ENCODE measurements at regions of chr10 and their contacts with region 1.

Region 1: DNA sequence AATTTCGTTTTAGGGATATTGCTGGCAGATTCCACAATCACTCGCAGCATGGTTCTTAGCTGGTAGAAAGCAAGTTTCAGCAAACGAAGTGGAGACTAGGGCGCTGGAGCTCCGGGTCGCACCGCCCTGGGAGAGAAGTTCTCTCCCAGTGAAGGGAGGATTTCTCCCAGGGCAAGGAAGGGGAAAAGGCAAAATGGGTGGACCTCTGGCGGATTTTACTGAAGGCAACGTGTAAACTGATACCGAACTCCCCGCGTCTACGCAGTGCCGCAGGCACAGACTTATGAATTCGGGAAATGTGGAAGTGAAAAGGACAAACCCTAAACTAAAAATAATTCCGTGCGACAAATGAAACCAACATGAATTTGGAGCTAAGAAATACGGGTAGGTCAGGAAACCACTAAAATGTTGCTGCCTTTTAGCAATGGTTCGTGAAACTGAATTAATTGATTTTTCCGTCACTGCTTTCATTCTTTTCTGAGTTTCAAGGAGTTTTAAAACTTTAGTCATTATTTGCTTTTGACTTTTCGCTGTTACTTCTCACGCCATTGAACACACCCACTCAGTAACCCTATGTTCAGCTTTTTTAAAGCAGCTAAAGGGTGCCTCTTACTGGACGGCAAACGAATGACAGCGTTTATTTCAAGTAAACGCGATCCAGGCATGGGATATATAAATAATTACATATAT is at the start of gene MYOF:
- DNase-seq: peak; percentile 68
- ATAC-seq: peak; percentile 79
- H3K4me3 Mint-ChIP-seq: peak within 1 kb of the TSS; percentile 97
- H3K27ac Mint-ChIP-seq: peak within 1 kb of the TSS; percentile 99
- H3K4me1 Mint-ChIP-seq: peaks cover 24% of the 10 kb centered on the region
- H3K27me3 Mint-ChIP-seq: peaks cover 9% of the 10 kb centered on the region
- total RNA-seq, gene MYOF: 37.8 to 40.0 TPM

Region 2: GRCh38 chr10:93080350-93081046 is 401.8 kb before region 1 on chr10:
- CTCF ChIA-PET with region 1: interaction called, 3 read pairs
- POLR2A ChIA-PET with region 1: no interaction called
- intact Hi-C with region 1: loop called in 1 of 2 experiments (anchors 2 kb)
- DNase-seq: peak; percentile 72
- ATAC-seq: peak; percentile 70
- H3K4me3 Mint-ChIP-seq: no peak overlapping the region
- H3K27ac Mint-ChIP-seq: no peak overlapping the region
- H3K4me1 Mint-ChIP-seq: peaks cover 7% of the 10 kb centered on the region
- H3K27me3 Mint-ChIP-seq: peaks cover 45% of the 10 kb centered on the region

Region 3: GRCh38 chr10:93363891-93364648 is 118.2 kb before region 1 on chr10:
- CTCF ChIA-PET with region 1: interaction called, 35 read pairs
- POLR2A ChIA-PET with region 1: no interaction called
- intact Hi-C with region 1: no loop called
- DNase-seq: no peak
- ATAC-seq: no peak
- H3K4me3 Mint-ChIP-seq: no peak overlapping the region
- H3K27ac Mint-ChIP-seq: no peak overlapping the region
- H3K4me1 Mint-ChIP-seq: no peaks in the 10 kb centered on the region
- H3K27me3 Mint-ChIP-seq: no peaks in the 10 kb centered on the region

Region 4: GRCh38 chr10:93413252-93413689 is 69.0 kb before region 1 on chr10:
- CTCF ChIA-PET with region 1: interaction called, 33 read pairs
- POLR2A ChIA-PET with region 1: no interaction called
- intact Hi-C with region 1: no loop called
- DNase-seq: peak; percentile 35
- ATAC-seq: peak; percentile 62
- H3K4me3 Mint-ChIP-seq: no peak overlapping the region
- H3K27ac Mint-ChIP-seq: peak overlapping the region; percentile 73
- H3K4me1 Mint-ChIP-seq: peaks cover 69% of the 10 kb centered on the region
- H3K27me3 Mint-ChIP-seq: no peaks in the 10 kb centered on the region

Region 5: DNA sequence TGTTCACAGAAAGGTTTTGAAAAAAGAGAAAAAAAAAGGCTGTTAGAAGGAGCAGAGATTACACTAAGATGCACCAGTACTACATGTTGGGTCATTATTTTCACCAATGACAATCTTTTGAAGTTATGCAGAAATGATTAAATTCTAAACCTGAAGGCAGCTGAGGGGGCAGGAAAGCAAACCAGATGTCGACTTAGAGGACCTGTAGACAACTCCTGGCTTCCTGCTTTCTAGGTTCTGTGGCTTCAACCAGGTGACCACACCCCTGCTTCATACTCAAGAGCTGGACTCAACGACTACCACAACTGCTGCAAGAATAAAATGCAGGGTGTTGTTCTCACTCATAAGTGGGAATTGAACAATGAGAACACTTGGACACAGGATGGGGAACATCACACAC is 30.1 kb before region 1 on chr10:
- CTCF ChIA-PET with region 1: no interaction called
- POLR2A ChIA-PET with region 1: no interaction called
- intact Hi-C with region 1: no loop called
- DNase-seq: peak; percentile 50
- ATAC-seq: peak; percentile 71
- H3K4me3 Mint-ChIP-seq: no peak overlapping the region
- H3K27ac Mint-ChIP-seq: no peak overlapping the region
- H3K4me1 Mint-ChIP-seq: peaks cover 10% of the 10 kb centered on the region
- H3K27me3 Mint-ChIP-seq: no peaks in the 10 kb centered on the region

Region 6: GRCh38 chr10:93496322-93497041 is 14.2 kb after region 1 on chr10 and contains the start of gene CEP55:
- CTCF ChIA-PET with region 1: interaction called, 20 read pairs
- POLR2A ChIA-PET with region 1: interaction called, 9 read pairs
- intact Hi-C with region 1: loop called (anchors 1 to 2 kb)
- DNase-seq: peak; percentile 98
- ATAC-seq: peak; percentile 99
- H3K4me3 Mint-ChIP-seq: peak within 1 kb of the TSS; percentile 78
- H3K27ac Mint-ChIP-seq: peak within 1 kb of the TSS; percentile 84
- H3K4me1 Mint-ChIP-seq: peaks cover 25% of the 10 kb centered on the region
- H3K27me3 Mint-ChIP-seq: peaks cover 2% of the 10 kb centered on the region
- total RNA-seq, gene CEP55: 67.8 to 76.0 TPM

Region 7: DNA sequence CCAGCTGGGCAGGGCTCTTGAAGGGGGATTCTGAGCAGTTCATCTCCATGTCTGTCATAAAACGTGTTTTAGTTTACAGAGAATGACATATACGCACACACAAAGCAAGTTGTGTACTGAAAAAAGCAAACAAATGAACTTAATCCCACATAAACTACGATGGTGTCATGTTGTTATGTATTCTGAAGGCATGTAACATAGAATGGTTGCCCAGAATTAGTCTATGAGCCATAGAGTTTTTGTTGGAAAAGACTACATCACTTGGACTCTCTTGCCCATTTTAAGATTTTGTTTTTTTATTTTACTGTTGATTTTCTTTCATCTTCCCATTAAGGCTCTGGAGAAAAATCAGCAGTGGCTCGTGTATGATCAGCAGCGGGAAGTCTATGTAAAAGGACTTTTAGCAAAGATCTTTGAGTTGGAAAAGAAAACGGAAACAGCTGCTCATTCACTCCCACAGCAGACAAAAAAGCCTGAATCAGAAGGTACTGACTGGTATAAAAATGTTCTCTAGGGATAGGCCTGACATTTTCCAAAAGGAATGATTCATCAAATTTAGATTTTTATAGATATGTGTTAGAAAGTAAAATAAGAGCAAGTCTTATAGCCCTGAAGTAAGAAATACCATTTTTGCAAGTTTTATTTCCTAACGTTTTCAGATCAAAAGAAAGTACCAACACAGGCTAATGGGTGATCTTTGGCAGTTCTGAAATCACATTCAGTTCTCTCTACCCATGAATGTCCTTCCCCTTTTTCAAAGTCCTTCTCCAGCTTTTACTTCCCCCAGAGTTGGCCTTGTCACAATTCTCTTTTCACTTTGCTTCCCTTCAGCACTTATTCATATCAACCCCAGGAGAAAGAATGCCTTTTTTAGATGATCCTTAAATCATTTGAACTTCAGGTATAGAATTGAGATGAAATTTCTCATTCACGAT is 33.0 kb after region 1 on chr10:
- CTCF ChIA-PET with region 1: interaction called, 71 read pairs
- POLR2A ChIA-PET with region 1: no interaction called
- intact Hi-C with region 1: loop called (anchors 1 to 2 kb)
- DNase-seq: no peak
- ATAC-seq: no peak
- H3K4me3 Mint-ChIP-seq: no peak overlapping the region
- H3K27ac Mint-ChIP-seq: no peak overlapping the region
- H3K4me1 Mint-ChIP-seq: peaks cover 5% of the 10 kb centered on the region
- H3K27me3 Mint-ChIP-seq: no peaks in the 10 kb centered on the region